ENCODE measurements at regions of chr2 and their contacts with region 1.

Region 1: GRCh38 chr2:171893824-171894611 is at the start of gene SLC25A12:
- DNase-seq: peak; percentile 75 to 87
- ATAC-seq: peak; percentile 86 to 90
- H3K4me3 ChIP-seq: peak within 1 kb of the TSS; percentile 84 to 97 (median 94)
- H3K27ac ChIP-seq: peak within 1 kb of the TSS; percentile 91 to 96 (median 93)
- H3K4me1 ChIP-seq: peaks cover 31 to 39% of the 10 kb centered on the region in 2 donors
- H3K27me3 ChIP-seq: no peaks in the 10 kb centered on the region
- CTCF ChIP-seq: no peak
- POLR2A ChIP-seq: peak; percentile 79 to 90
- total RNA-seq, gene SLC25A12: 54.2 to 91.3 (median 79.0) TPM

Region 2: DNA sequence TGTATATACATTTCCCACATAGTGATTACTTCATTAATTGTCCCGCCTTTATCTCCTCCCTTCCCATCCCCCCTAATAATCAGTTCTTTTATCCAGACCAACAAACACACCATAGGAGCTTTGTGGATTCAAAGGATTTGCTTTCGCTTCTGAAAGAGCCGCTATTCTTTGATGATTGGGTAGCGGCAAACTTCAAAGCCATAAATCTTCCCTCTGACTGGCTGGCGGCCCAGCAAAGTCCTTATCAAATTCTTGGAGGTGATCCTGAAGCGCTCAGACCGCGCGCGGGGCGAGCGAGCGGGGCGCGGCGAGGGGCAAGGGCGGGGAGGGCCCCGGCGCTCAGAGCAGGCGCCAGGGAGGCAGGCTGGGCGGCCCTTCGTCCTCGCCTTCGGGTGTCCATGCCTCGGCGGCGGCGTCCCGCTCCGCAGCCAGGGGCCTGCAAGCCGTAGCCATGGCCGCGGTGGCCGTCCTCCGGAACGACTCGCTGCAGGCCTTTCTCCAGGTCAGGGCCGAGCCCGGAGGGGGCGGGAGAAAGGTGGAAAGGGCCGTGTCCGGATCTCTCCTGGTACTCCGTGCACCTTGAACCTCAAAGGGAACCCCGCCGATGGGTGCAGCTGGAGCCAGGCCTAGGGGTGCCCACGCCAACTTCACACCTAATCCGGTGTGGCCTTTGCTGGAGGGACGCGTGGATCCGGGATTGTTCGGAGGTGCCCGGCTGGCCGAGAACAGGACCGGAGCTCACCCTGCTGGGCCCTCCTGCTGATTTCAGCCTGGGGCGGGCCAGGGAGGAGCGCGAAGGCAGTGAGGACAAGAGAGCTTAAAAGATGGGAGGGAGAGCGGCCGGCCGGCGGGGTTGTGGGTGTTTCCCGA is 1178.7 kb before region 1 on chr2 and contains the start of gene SP5:
- in situ Hi-C with region 1: no loop called
- intact Hi-C with region 1: no loop called
- DNase-seq: no peak
- ATAC-seq: peak in 1 of 2 donors; percentile 14
- H3K4me3 ChIP-seq: peak within 1 kb of the TSS; percentile 44 to 63 (median 58)
- H3K27ac ChIP-seq: no peak within 1 kb of the TSS
- H3K4me1 ChIP-seq: peaks cover 4 to 16% of the 10 kb centered on the region in 2 donors
- H3K27me3 ChIP-seq: peaks cover 82 to 94% (median 86%) of the 10 kb centered on the region in 3 donors
- CTCF ChIP-seq: no peak
- POLR2A ChIP-seq: no peak
- total RNA-seq, gene SP5: 0.29 to 0.44 (median 0.39) TPM in 3 of 4 donors, not detected in the other

Region 3: DNA sequence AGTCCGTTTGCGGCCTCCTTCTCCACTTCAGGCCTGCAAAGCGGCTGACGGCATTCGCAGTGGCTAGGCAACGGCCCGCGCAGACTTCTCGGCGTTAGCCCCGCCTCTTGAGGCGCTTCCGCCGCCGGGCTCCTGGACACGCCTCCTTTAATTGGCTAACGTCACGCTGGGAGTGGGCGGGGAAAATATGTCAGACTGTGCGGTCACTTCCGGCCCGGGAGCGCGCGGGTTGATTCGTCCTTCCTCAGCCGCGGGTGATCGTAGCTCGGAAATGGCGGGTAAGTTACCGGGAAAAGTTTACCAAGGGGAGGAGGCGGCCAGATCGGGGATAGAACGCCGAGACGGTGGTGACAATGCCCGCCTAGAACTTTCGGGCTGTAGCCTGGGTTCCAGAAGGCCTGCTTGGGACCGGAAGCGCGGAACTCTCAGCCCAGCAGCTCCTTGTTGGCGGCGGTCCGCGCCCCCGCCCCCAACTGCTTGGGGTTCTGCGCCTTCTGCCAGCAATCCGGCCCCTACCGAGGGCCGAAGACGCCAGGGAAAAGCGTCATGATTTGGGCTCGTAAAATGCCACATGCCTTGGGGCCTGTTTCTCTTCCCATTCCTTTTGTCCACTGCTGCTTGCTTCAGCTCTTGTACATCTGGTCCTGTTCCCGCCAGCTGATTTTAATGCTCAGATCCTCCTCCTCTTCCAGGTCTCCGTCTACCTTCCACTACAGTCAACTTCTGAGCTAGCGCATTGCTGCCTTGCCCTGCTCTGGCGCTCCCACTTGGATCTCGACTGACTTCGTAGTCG is 28.4 kb after region 1 on chr2 and contains the start of gene HAT1:
- in situ Hi-C with region 1: no loop called
- intact Hi-C with region 1: loop called (anchors 1 kb)
- DNase-seq: peak; percentile 96
- ATAC-seq: peak; percentile 97 to 98
- H3K4me3 ChIP-seq: peak within 1 kb of the TSS; percentile 84 to 94 (median 86)
- H3K27ac ChIP-seq: peak within 1 kb of the TSS; percentile 92 to 94 (median 93)
- H3K4me1 ChIP-seq: peaks cover 23 to 24% of the 10 kb centered on the region in 2 donors
- H3K27me3 ChIP-seq: no peaks in the 10 kb centered on the region
- CTCF ChIP-seq: no peak
- POLR2A ChIP-seq: peak; percentile 61 to 78
- total RNA-seq, gene HAT1: 30.6 to 61.9 (median 50.0) TPM

Region 4: GRCh38 chr2:171939743-171940071 is 45.7 kb after region 1 on chr2:
- in situ Hi-C with region 1: no loop called
- intact Hi-C with region 1: loop called (anchors 5 kb)
- DNase-seq: no peak
- ATAC-seq: peak; percentile 15 to 51
- H3K4me3 ChIP-seq: no peak overlapping the region
- H3K27ac ChIP-seq: peak overlapping the region; percentile 82 to 87 (median 84)
- H3K4me1 ChIP-seq: peaks cover 10 to 25% of the 10 kb centered on the region in 2 donors
- H3K27me3 ChIP-seq: no peaks in the 10 kb centered on the region
- CTCF ChIP-seq: no peak
- POLR2A ChIP-seq: no peak

Measured in gastrocnemius medialis (tissue), 4 donors.